PC-3 (cell line): ENCODE measurements at regions of chr12 and their contacts with region 1.

Region 1: GRCh38 chr12:124940549-124941527 is 26.4 kb upstream of the UBC start:
- DNase-seq: peak; percentile 97
- ATAC-seq: peak; percentile 54
- H3K4me3 ChIP-seq: peak overlapping the region; percentile 71
- H3K27ac ChIP-seq: peak overlapping the region; percentile 61
- H3K4me1 ChIP-seq: peaks cover 24% of the 10 kb centered on the region
- H3K27me3 ChIP-seq: no peaks in the 10 kb centered on the region
- CTCF ChIP-seq: peak; percentile 95

Region 2: DNA sequence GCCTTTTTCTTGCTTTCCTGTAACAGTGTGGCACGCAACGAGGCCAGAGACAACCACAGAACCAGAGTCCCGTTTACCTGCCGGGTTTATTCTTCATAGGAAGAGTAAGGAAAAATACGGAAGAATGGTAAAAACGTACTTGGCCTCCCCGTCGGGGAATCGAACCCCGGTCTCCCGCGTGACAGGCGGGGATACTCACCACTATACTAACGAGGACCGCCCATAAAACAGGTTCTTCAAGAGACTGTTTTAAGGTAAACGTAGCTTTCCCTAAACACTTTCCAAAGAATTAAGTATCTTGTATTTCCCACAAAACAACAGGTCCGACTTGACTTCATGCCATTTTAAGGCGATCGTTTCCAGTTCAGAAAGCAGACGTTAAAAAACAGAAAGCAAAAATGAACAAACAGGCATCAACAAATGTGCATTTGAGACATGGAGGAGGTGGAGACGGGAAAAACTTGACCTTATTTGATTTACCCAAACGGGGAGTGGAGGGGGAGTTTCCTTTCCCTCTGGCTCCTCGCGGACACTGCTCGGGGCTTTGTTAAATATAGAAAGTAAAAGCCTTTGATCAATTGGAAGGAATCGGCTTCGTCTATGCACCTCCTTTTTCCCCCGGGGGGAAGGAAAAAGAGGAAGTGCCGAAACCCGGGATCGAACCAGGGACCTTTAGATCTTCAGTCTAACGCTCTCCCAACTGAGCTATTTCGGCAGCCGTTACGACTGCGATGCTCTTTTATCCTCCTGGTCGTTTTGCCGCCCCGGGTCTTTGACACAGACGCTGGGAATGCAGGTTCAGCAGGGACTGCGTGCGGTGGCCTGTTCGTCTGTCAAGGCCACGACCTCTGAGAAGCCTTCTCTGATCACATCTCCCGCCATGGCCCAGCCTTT is 13.4 kb before region 1 on chr12:
- CTCF ChIA-PET with region 1: interaction called, 8 read pairs
- POLR2A ChIA-PET with region 1: interaction called, 3 read pairs
- intact Hi-C with region 1: loop called (anchors 1 kb)
- DNase-seq: peak; percentile 97
- ATAC-seq: peak; percentile 62
- H3K4me3 ChIP-seq: peak overlapping the region; percentile 83
- H3K27ac ChIP-seq: peak overlapping the region; percentile 58
- H3K4me1 ChIP-seq: peaks cover 19% of the 10 kb centered on the region
- H3K27me3 ChIP-seq: no peaks in the 10 kb centered on the region
- CTCF ChIP-seq: no peak

Region 3: GRCh38 chr12:125114365-125115141 is 173.7 kb after region 1 on chr12:
- CTCF ChIA-PET with region 1: no interaction called
- POLR2A ChIA-PET with region 1: no interaction called
- intact Hi-C with region 1: no loop called
- DNase-seq: no peak
- ATAC-seq: no peak
- H3K4me3 ChIP-seq: no peak overlapping the region
- H3K27ac ChIP-seq: no peak overlapping the region
- H3K4me1 ChIP-seq: no peaks in the 10 kb centered on the region
- H3K27me3 ChIP-seq: no peaks in the 10 kb centered on the region
- CTCF ChIP-seq: no peak